Activated CD4-positive, alpha-beta T cell treated with anti-CD3 and anti-CD28 coated beads for 36 hours (primary cell): ENCODE measurements at regions of chr15 and their contacts with region 1.

Region 1: GRCh38 chr15:70584838-70585706 is 178.3 kb downstream of the UACA start:
- DNase-seq: peak; percentile 75
- ATAC-seq: peak; percentile 86
- H3K4me3 Mint-ChIP-seq: peak overlapping the region; percentile 41
- H3K27ac Mint-ChIP-seq: no peak overlapping the region
- H3K4me1 Mint-ChIP-seq: peaks cover 20% of the 10 kb centered on the region
- H3K27me3 Mint-ChIP-seq: peaks cover 13% of the 10 kb centered on the region

Region 2: DNA sequence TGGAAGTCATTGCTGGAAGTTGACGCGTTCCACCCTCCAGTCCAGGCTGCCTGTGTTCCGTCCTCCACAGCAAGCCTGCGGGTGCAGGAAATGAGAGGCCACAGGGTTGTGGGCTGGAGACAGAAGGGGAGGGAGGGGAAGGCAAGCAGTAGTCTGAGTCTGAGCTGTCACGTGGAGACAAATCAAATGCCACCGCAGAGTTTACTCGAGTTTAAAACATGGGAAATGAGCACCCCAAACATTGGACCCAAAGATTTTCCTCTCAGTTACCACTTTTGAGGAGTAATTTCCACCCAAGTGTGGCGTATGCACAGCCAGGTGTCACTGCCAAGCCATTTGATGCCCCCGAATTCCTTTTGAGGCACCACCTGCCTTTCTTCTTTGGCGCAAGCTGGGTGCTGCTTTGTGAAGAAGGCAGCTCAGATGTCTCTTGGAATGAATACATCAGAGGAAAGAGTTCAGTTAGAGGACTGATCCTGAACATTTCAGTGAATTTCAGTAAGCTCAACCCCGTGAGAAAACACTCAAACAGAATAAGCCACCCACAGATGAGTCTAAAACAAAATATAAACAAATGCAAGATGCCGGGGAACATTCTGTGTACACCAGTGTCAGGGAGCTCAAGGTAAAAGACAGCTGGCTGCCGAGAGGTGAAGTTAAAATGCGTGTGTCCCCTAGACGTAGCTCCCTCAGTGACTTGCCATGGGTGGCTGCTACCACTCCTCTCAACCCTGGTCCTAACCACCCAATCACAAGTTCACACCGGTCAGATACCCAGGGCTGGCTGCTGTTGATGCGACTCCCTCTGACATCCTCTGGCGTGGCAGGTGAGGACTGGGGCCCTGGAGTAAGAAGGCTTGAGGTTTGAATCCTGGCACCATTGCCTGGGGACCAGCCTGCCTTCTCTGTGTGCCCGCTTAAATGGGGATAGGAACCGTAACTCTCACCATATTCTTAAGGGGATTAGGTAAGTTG is 25.5 kb before region 1 on chr15:
- CTCF ChIA-PET with region 1: interaction called, 3 read pairs
- POLR2A ChIA-PET with region 1: no interaction called
- intact Hi-C with region 1: loop called in 1 of 2 experiments (anchors 1 kb)
- DNase-seq: peak; percentile 86
- ATAC-seq: peak; percentile 85
- H3K4me3 Mint-ChIP-seq: no peak overlapping the region
- H3K27ac Mint-ChIP-seq: no peak overlapping the region
- H3K4me1 Mint-ChIP-seq: peaks cover 14% of the 10 kb centered on the region
- H3K27me3 Mint-ChIP-seq: no peaks in the 10 kb centered on the region

Region 3: DNA sequence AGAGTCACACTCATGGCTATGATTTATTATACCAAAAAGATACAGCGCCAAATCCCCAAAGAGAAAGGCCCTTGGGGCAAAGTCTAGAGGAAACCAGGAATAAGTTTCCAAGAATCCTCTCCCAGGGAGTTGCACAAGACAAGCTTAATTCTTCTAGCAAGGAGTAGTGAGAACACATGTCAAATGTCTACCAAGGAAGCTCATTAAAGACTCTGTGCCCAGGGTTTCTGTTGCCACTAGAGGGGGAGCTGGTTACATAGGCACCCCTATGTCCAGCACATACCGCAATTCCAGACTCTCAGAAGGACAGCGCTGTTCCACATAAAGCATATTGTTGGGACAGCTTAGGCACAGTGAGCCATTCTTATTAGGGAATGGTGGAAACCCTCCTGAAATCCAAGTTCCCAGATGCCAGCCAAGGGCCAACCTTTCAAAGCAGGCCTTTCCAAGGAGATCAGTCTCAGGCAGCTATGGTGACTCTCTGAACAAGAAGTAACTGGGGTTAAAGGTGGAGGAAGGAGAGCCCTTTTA is 15.9 kb before region 1 on chr15:
- CTCF ChIA-PET with region 1: interaction called, 19 read pairs
- POLR2A ChIA-PET with region 1: no interaction called
- intact Hi-C with region 1: no loop called
- DNase-seq: no peak
- ATAC-seq: no peak
- H3K4me3 Mint-ChIP-seq: no peak overlapping the region
- H3K27ac Mint-ChIP-seq: no peak overlapping the region
- H3K4me1 Mint-ChIP-seq: peaks cover 15% of the 10 kb centered on the region
- H3K27me3 Mint-ChIP-seq: no peaks in the 10 kb centered on the region